Breast epithelium (tissue), 4 donors: ENCODE measurements at regions of chr5 and their contacts with region 1.

Region 1: DNA sequence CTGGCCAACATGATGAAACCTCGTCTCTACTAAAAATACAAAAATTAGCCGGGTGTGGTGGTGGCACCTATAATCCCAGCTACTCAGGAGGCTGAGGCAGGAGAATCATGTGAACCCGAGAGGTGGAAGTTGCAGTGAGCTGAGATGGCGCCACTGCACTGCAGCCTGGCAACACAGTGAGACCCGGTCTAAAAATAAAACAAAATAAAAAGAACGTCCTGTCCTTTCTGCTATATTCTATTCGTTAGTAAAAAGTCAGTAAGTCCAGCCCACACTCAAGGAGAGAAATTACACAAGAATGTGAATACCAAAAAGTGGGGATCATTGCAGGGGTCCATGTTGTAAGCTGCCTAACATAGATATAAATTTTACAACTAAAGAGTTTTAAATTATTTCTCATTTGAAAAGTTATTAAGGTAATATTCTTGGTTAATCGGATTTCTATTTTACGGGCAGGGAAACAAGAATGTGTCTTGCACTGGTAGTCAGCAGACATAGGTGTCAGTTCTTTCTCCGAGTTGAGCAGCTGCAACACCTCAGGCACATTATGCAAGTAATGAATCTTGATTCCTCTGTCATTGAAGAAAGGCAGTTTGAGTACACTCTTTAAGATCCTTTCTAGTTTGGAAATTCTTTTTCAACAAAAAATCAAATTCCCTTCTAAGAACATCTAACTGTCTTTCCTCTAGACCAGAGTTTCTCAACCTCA is 24.5 kb downstream of the NMUR2 start:
- DNase-seq: no peak
- H3K4me3 ChIP-seq: no peak overlapping the region
- H3K27ac ChIP-seq: no peak overlapping the region
- H3K4me1 ChIP-seq: no peaks in the 10 kb centered on the region
- H3K27me3 ChIP-seq: no peaks in the 10 kb centered on the region
- CTCF ChIP-seq: no peak
- POLR2A ChIP-seq: no peak

Region 2: GRCh38 chr5:151847871-151848270 is 532.7 kb before region 1 on chr5:
- intact Hi-C with region 1: loop called (anchors 5 kb)
- DNase-seq: no peak
- H3K4me3 ChIP-seq: no peak overlapping the region
- H3K27ac ChIP-seq: no peak overlapping the region
- H3K4me1 ChIP-seq: no peaks in the 10 kb centered on the region
- H3K27me3 ChIP-seq: no peaks in the 10 kb centered on the region
- CTCF ChIP-seq: no peak
- POLR2A ChIP-seq: no peak

Region 3: GRCh38 chr5:152439791-152440190 is 59.2 kb after region 1 on chr5:
- intact Hi-C with region 1: no loop called
- DNase-seq: no peak
- H3K4me3 ChIP-seq: no peak overlapping the region
- H3K27ac ChIP-seq: no peak overlapping the region
- H3K4me1 ChIP-seq: no peaks in the 10 kb centered on the region
- H3K27me3 ChIP-seq: no peaks in the 10 kb centered on the region
- CTCF ChIP-seq: no peak
- POLR2A ChIP-seq: no peak